ENCODE measurements at regions of chr1 and their contacts with region 1.

Region 1: DNA sequence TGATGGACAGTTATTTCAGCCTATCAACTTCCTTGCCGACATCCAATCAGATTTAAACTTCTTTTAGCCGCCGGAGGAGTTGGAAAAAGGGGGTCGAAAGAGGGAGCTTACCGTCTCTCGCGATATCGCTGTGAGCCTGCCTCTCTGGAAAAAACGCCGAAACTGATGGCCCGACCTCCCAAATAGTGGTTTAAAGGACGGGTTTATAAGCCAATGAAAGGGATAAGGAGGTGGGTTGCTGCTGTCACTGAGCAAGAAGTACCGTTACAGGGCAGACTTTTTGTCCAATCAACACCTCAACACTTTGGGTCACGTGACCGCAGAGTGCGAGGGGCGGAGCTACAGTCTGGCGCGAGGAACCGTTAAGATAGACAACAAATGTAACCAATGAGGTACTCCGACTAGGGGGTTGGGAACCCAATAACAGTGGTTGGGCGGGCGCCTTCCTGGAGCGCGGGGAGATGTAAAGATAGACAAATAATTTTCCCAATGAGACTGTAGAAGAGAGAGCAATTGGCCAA is at the start of gene RBM15:
- DNase-seq: peak; percentile 95 to 99
- ATAC-seq: peak; percentile 82 to 91 (median 87)
- H3K4me3 ChIP-seq: peak within 1 kb of the TSS; percentile 54 to 98 (median 82)
- H3K27ac ChIP-seq: peak within 1 kb of the TSS; percentile 95 to 100 (median 98)
- H3K4me1 ChIP-seq: peaks cover 16 to 62% (median 49%) of the 10 kb centered on the region in 9 donors
- H3K27me3 ChIP-seq: no peaks in the 10 kb centered on the region
- CTCF ChIP-seq: no peak
- total RNA-seq, gene RBM15: 15.4 to 22.3 (median 19.4) TPM

Region 2: DNA sequence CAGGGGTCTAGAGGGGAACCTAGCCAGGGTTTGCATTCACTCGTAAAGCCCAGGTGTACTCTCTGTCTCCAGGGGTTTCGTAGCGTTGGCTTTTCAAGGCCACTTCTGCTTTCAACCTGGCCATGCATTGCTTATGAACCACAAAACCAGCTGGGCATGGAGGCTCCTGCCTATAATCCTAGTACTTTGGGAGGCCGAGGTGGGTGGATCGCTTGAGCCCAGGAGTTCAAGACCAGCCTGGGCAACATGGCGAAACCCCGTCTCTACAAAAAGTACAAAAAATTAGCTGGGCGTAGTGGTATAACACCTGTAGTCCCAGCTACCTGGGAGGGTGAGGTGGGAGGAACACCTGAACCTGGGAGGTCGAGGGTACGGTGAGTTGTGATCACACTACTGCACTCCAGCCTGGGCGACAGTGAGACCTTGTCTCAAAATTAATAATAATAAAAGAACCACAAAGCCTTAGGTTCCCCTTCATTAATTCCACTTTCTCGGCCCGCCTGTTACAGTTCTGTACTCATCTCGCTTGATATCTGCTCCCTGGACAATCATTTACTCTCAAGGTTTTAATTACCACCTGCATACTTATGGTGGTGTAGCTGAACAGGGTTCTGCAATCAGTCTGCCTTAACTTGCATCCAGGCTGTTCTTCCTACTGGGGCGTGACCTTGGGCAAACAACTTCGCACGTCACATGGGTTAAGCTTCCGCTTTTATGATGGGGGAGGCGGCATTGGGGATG is 45.8 kb after region 1 on chr1:
- intact Hi-C with region 1: loop called in 1 of 10 experiments (anchors 5 kb)
- DNase-seq: no peak
- ATAC-seq: no peak
- H3K4me3 ChIP-seq: no peak overlapping the region
- H3K27ac ChIP-seq: peak overlapping the region in 4 of 10 donors; percentile 40 to 76 (median 67)
- H3K4me1 ChIP-seq: peaks cover 0 to 36% (median 13%) of the 10 kb centered on the region in 9 donors
- H3K27me3 ChIP-seq: no peaks in the 10 kb centered on the region
- CTCF ChIP-seq: no peak

Region 3: GRCh38 chr1:110390692-110391245 is 51.8 kb after region 1 on chr1 and contains the start of gene SLC16A4:
- intact Hi-C with region 1: loop called in 2 of 10 experiments (anchors 5 to 10 kb)
- DNase-seq: peak in 1 of 2 donors; percentile 22
- ATAC-seq: peak in 7 of 8 donors; percentile 67 to 91 (median 84)
- H3K4me3 ChIP-seq: peak within 1 kb of the TSS in 8 of 10 donors; percentile 21 to 52 (median 38)
- H3K27ac ChIP-seq: peak within 1 kb of the TSS in 7 of 10 donors; percentile 5 to 68 (median 49)
- H3K4me1 ChIP-seq: peaks cover 0 to 5% (median 0%) of the 10 kb centered on the region in 9 donors
- H3K27me3 ChIP-seq: no peaks in the 10 kb centered on the region
- CTCF ChIP-seq: no peak
- total RNA-seq, gene SLC16A4: 1.3 to 3.5 (median 2.4) TPM

Region 4: GRCh38 chr1:110407260-110408210 is 68.6 kb after region 1 on chr1 and contains the start of gene LAMTOR5:
- intact Hi-C with region 1: loop called in 8 of 10 experiments (anchors 1 to 10 kb)
- DNase-seq: peak; percentile 92 to 97
- ATAC-seq: peak; percentile 95 to 99 (median 98)
- H3K4me3 ChIP-seq: peak within 1 kb of the TSS; percentile 52 to 99 (median 78)
- H3K27ac ChIP-seq: peak within 1 kb of the TSS; percentile 83 to 98 (median 94)
- H3K4me1 ChIP-seq: peaks cover 2 to 35% (median 24%) of the 10 kb centered on the region in 9 donors
- H3K27me3 ChIP-seq: no peaks in the 10 kb centered on the region
- CTCF ChIP-seq: peak in 5 of 9 donors; percentile 15 to 38 (median 27)
- total RNA-seq, gene LAMTOR5: 209 to 268 (median 245) TPM